Natural killer cell (primary cell): ENCODE measurements at regions of chr5 and their contacts with region 1.

Region 1: GRCh38 chr5:142783601-142784341 is 13.6 kb downstream of the ARHGAP26 start:
- DNase-seq: peak; percentile 55 to 70
- ATAC-seq: peak; percentile 67 to 82 (median 77)
- H3K4me3 ChIP-seq: peak overlapping the region; percentile 14
- H3K4me3 Mint-ChIP-seq: peak overlapping the region; percentile 69
- H3K27ac ChIP-seq: peak overlapping the region; percentile 62
- H3K27ac Mint-ChIP-seq: peak overlapping the region; percentile 91 to 94
- H3K4me1 ChIP-seq: peaks cover 72% of the 10 kb centered on the region
- H3K4me1 Mint-ChIP-seq: peaks cover 94 to 96% of the 10 kb centered on the region in 2 donors
- H3K27me3 ChIP-seq: no peaks in the 10 kb centered on the region
- H3K27me3 Mint-ChIP-seq: no peaks in the 10 kb centered on the region
- CTCF ChIP-seq: no peak

Region 2: GRCh38 chr5:142063878-142064331 is 719.9 kb before region 1 on chr5:
- intact Hi-C with region 1: no loop called
- DNase-seq: peak in 1 of 2 donors; percentile 57
- ATAC-seq: peak; percentile 67 to 72 (median 69)
- H3K4me3 ChIP-seq: no peak overlapping the region
- H3K4me3 Mint-ChIP-seq: peak overlapping the region; percentile 35
- H3K27ac ChIP-seq: no peak overlapping the region
- H3K27ac Mint-ChIP-seq: peak overlapping the region in 1 of 2 donors; percentile 40
- H3K4me1 ChIP-seq: peaks cover 9% of the 10 kb centered on the region
- H3K4me1 Mint-ChIP-seq: peaks cover 8 to 9% of the 10 kb centered on the region in 2 donors
- H3K27me3 ChIP-seq: no peaks in the 10 kb centered on the region
- H3K27me3 Mint-ChIP-seq: peaks cover 3 to 7% of the 10 kb centered on the region in 2 donors
- CTCF ChIP-seq: no peak

Region 3: DNA sequence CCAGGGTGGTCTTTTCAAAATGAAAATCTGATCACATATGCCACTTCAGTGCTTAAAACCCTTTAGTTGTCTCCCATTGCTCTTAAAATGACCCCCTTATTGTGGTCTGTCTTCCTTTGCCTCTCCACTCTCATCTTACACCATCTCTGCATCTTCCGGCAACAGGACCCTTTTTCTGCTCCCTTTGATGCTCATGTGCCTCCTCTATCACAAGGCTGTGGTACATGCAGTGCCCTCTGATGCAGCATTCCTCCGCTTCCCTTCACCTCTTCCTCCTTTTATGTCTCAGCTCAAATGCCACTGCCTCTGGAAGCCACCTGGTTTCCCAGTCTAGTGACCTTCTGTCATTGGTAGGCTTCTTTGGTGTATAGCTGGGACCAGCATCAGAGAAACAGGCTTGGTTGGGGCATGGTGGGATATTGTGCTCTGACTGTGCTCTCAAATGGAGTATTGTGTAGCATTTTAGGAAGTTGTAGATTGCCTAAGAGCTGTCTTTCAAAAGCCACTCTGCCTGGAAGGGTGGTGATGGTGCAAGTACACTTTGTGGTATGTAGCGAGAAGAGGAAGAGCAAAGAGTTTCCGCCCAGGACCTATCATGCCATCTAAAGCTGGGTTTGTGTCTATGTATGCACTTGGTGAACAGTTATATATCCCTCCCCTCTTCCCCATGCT is 14.5 kb after region 1 on chr5:
- intact Hi-C with region 1: loop called (anchors 1 kb)
- DNase-seq: peak; percentile 29 to 71
- ATAC-seq: peak; percentile 66 to 90 (median 82)
- H3K4me3 ChIP-seq: peak overlapping the region; percentile 15
- H3K4me3 Mint-ChIP-seq: peak overlapping the region; percentile 77
- H3K27ac ChIP-seq: peak overlapping the region; percentile 61
- H3K27ac Mint-ChIP-seq: peak overlapping the region; percentile 83 to 90
- H3K4me1 ChIP-seq: peaks cover 53% of the 10 kb centered on the region
- H3K4me1 Mint-ChIP-seq: peaks cover 83 to 84% of the 10 kb centered on the region in 2 donors
- H3K27me3 ChIP-seq: no peaks in the 10 kb centered on the region
- H3K27me3 Mint-ChIP-seq: no peaks in the 10 kb centered on the region
- CTCF ChIP-seq: no peak

Region 4: DNA sequence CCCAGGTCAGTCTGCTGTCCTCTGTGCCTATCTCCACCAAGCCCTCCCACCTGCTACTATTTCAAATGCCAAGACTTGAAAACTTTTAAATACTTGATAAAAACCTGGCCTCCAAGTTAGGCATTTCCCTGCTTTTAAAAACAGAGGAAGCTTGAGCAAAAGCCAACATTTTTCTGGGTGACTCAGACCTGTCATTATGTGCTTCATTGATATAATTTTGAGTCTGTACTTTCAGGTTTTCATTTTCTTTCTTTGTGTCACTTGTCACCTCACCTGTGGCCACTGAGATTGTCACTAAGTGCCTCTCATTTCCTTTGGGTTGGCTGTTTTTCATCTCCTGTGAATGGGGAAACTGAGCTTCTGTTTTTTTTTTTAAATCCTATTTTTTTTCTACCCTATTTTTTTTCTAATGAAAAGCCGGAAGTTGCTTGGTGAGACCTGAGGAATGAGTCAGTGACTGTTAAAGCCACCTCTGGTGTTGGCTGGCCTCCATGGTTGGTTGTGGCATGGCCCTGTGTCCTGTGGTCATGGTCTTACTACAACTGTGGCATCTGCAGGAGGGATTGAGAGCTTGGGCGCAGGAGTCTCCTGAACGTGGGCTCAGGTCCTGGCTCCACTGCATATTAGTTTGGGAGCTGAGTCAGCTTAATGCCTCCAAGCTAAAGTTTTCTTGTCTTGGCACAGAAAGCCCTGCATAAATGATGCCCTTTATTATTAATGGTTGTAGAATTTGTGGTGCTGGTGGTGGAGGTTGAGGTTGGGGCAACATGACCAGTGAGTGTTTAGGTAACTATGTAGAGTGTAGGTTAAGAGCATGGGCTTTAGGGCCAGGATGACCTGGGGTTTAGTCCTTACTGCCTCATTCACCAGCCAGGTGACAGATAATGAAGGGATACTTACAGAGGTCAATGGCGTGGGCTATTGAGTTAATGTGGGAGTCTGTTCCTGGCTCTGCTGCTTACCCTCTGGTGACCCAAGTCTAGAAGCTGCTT is 43.3 kb after region 1 on chr5:
- intact Hi-C with region 1: loop called (anchors 2 kb)
- DNase-seq: peak; percentile 48 to 52
- ATAC-seq: peak; percentile 79 to 91 (median 79)
- H3K4me3 ChIP-seq: no peak overlapping the region
- H3K4me3 Mint-ChIP-seq: peak overlapping the region; percentile 66
- H3K27ac ChIP-seq: no peak overlapping the region
- H3K27ac Mint-ChIP-seq: peak overlapping the region; percentile 68 to 79
- H3K4me1 ChIP-seq: peaks cover 46% of the 10 kb centered on the region
- H3K4me1 Mint-ChIP-seq: peaks cover 99% of the 10 kb centered on the region in 2 donors
- H3K27me3 ChIP-seq: no peaks in the 10 kb centered on the region
- H3K27me3 Mint-ChIP-seq: no peaks in the 10 kb centered on the region
- CTCF ChIP-seq: no peak